ENCODE measurements at regions of chr13 and their contacts with region 1.

Region 1: GRCh38 chr13:113562085-113562749 is 22.3 kb upstream of the TFDP1 start:
- DNase-seq: peak; percentile 73
- ATAC-seq: peak; percentile 70
- H3K4me3 Mint-ChIP-seq: no peak overlapping the region
- H3K27ac Mint-ChIP-seq: no peak overlapping the region
- H3K4me1 Mint-ChIP-seq: peaks cover 2% of the 10 kb centered on the region
- H3K27me3 Mint-ChIP-seq: peaks cover 3% of the 10 kb centered on the region

Region 2: GRCh38 chr13:113275387-113275786 is 286.8 kb before region 1 on chr13:
- CTCF ChIA-PET with region 1: no interaction called
- POLR2A ChIA-PET with region 1: no interaction called
- intact Hi-C with region 1: loop called in 1 of 2 experiments (anchors 2 kb)
- DNase-seq: peak; percentile 65
- ATAC-seq: peak; percentile 85
- H3K4me3 Mint-ChIP-seq: no peak overlapping the region
- H3K27ac Mint-ChIP-seq: no peak overlapping the region
- H3K4me1 Mint-ChIP-seq: peaks cover 2% of the 10 kb centered on the region
- H3K27me3 Mint-ChIP-seq: peaks cover 8% of the 10 kb centered on the region

Region 3: GRCh38 chr13:113364311-113364889 is 197.8 kb before region 1 on chr13:
- CTCF ChIA-PET with region 1: no interaction called
- POLR2A ChIA-PET with region 1: no interaction called
- intact Hi-C with region 1: no loop called
- DNase-seq: no peak
- ATAC-seq: no peak
- H3K4me3 Mint-ChIP-seq: no peak overlapping the region
- H3K27ac Mint-ChIP-seq: no peak overlapping the region
- H3K4me1 Mint-ChIP-seq: peaks cover 4% of the 10 kb centered on the region
- H3K27me3 Mint-ChIP-seq: peaks cover 18% of the 10 kb centered on the region

Region 4: DNA sequence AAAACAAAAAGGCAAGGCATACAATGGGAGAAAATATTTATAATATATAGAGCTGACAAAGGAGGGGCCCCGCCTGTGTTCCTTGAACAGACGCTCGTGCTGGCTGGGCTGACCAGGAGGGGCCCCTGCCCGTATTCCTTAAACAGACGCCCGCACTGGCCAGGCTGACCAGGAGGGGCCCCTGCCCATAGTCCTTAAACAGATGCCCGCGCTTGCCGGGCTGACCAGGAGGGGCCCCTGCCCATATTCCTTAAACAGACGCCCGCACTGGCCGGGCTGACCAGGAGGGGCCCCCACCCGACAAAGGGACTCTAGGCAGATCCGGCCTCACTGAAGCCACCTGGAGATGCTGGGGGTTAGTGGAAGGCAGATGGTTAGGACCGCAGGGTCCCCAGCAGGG is 118.2 kb before region 1 on chr13:
- CTCF ChIA-PET with region 1: no interaction called
- POLR2A ChIA-PET with region 1: no interaction called
- intact Hi-C with region 1: no loop called
- DNase-seq: no peak
- ATAC-seq: no peak
- H3K4me3 Mint-ChIP-seq: no peak overlapping the region
- H3K27ac Mint-ChIP-seq: no peak overlapping the region
- H3K4me1 Mint-ChIP-seq: no peaks in the 10 kb centered on the region
- H3K27me3 Mint-ChIP-seq: no peaks in the 10 kb centered on the region

Region 5: GRCh38 chr13:113458253-113459065 is 103.8 kb before region 1 on chr13:
- CTCF ChIA-PET with region 1: no interaction called
- POLR2A ChIA-PET with region 1: no interaction called
- intact Hi-C with region 1: loop called in 1 of 2 experiments (anchors 5 kb)
- DNase-seq: peak; percentile 16
- ATAC-seq: no peak
- H3K4me3 Mint-ChIP-seq: no peak overlapping the region
- H3K27ac Mint-ChIP-seq: no peak overlapping the region
- H3K4me1 Mint-ChIP-seq: no peaks in the 10 kb centered on the region
- H3K27me3 Mint-ChIP-seq: no peaks in the 10 kb centered on the region

Measured in activated CD4-positive, alpha-beta T cell treated with anti-CD3 and anti-CD28 coated beads for 36 hours (primary cell).